ENCODE measurements at regions of chr4 and their contacts with region 1.

Region 1: GRCh38 chr4:80202190-80202711 is 4.9 kb downstream of the PRDM8 start:
- DNase-seq: peak; percentile 38 to 81 (median 62)
- H3K4me3 ChIP-seq: peak overlapping the region; percentile 22 to 80 (median 50)
- H3K27ac ChIP-seq: peak overlapping the region in 57 of 59 donors; percentile 13 to 94 (median 76)
- H3K27me3 ChIP-seq: peaks cover 0 to 81% (median 38%) of the 10 kb centered on the region in 45 donors
- CTCF ChIP-seq: peak in 55 of 56 donors; percentile 50 to 87 (median 69)

Region 2: DNA sequence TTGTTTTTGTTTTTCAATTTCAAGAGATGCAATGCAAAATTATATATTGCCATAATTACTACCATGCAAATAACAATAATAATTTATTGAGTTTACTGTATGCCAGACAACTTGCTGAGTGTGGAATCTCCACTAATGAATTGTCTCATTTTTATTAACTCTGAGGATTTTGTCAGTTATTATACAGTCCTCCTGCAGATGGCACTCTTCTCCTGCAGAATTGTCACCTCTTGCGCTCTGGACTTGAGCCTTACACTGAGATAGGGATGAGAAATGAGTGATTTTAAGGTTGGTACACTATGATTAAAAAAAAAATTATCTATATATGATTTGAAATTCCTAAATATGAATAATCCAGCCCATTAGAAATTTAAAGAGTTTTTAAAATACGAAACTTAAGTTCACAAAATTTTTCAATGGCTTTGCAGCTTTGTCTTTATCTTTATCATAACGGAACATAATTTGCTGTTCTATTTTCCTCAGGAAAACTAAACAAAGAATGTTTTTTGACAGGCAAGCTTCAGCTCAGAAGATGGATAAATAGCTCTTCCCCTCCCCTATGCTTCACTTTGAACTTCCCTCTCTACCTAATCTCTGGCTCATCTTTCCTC is 1250.3 kb before region 1 on chr4:
- intact Hi-C with region 1: loop called in 1 of 2 experiments (anchors 5 kb)
- DNase-seq: peak in 2 of 10 donors; percentile 18 to 43
- H3K4me3 ChIP-seq: no peak overlapping the region
- H3K27ac ChIP-seq: no peak overlapping the region
- H3K27me3 ChIP-seq: no peaks in the 10 kb centered on the region
- CTCF ChIP-seq: peak; percentile 50 to 94 (median 78)

Region 3: GRCh38 chr4:79042079-79042674 is 1160.1 kb before region 1 on chr4:
- intact Hi-C with region 1: loop called in 1 of 2 experiments (anchors 10 kb)
- DNase-seq: peak in 1 of 10 donors; percentile 26
- H3K4me3 ChIP-seq: no peak overlapping the region
- H3K27ac ChIP-seq: no peak overlapping the region
- H3K27me3 ChIP-seq: no peaks in the 10 kb centered on the region
- CTCF ChIP-seq: peak in 53 of 56 donors; percentile 30 to 70 (median 48)

Region 4: GRCh38 chr4:80184053-80184790 is 18.0 kb before region 1 on chr4:
- intact Hi-C with region 1: loop called (anchors 2 kb)
- DNase-seq: peak in 9 of 10 donors; percentile 55 to 87 (median 77)
- H3K4me3 ChIP-seq: peak overlapping the region; percentile 48 to 83 (median 67)
- H3K27ac ChIP-seq: peak overlapping the region in 57 of 59 donors; percentile 4 to 94 (median 80)
- H3K27me3 ChIP-seq: peaks cover 0 to 43% (median 24%) of the 10 kb centered on the region in 45 donors
- CTCF ChIP-seq: peak; percentile 38 to 99 (median 92)

Region 5: DNA sequence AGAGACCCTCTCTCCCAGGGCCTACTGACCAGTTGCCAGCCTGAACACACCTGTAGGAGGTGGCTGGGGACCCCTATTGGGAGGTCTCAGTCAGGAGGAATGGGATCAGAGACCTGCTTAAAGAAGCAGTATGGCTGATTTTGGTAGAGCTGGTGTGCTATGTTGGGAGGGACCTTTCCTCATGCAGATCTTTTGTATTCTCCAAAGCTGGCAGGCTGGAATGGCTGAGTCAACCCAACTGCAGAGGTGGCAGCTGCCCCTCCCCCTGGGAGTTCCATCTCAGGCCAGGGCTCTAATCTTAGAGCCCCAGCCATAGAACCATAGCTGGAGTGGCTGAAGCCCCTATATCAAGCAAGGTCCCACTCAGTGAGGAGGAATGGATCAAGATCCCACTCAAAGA is 548.9 kb after region 1 on chr4:
- intact Hi-C with region 1: no loop called
- DNase-seq: no peak
- H3K4me3 ChIP-seq: no peak overlapping the region
- H3K27ac ChIP-seq: no peak overlapping the region
- H3K27me3 ChIP-seq: no peaks in the 10 kb centered on the region
- CTCF ChIP-seq: no peak